Left cardiac atrium (tissue), 4 donors: ENCODE measurements at regions of chr22 and their contacts with region 1.

Region 1: DNA sequence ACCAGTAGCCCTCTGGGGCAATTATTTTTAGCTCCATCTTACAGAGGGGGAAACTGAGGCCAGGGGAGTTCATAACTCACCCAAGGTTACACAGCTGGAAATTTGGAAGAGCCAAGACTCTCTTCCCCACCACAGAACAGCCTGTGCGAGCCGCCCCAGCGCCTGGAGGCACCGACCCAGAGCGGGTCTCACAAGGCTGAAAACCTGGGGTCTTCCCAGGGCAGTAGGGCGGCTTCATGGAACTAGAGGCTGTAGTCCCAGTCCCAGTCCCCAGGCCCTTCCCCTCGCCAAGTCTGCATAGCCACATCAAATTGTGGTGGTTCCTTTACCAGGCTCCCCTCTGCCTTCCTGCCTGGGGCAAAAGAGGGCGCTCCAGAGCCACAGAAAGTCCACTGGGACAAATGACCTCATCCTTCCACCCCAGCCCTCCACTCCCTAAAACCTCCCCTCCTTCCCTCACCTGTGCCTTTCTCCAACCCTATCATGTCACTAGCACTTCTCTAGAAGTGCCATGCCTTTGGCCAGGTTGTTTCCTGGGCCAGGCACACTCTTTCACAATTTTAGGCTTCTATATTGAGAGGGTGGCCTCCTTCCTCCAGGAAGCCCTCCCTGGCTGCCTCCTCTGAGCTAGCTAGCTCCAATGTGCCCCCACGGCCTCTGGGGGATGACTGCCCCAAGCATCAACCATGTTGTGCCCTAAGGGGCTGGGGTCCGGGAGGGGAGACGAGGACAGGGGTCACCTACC is 15.2 kb upstream of the CDC42EP1 start:
- DNase-seq: peak; percentile 78
- ATAC-seq: peak; percentile 27 to 57

Region 2: DNA sequence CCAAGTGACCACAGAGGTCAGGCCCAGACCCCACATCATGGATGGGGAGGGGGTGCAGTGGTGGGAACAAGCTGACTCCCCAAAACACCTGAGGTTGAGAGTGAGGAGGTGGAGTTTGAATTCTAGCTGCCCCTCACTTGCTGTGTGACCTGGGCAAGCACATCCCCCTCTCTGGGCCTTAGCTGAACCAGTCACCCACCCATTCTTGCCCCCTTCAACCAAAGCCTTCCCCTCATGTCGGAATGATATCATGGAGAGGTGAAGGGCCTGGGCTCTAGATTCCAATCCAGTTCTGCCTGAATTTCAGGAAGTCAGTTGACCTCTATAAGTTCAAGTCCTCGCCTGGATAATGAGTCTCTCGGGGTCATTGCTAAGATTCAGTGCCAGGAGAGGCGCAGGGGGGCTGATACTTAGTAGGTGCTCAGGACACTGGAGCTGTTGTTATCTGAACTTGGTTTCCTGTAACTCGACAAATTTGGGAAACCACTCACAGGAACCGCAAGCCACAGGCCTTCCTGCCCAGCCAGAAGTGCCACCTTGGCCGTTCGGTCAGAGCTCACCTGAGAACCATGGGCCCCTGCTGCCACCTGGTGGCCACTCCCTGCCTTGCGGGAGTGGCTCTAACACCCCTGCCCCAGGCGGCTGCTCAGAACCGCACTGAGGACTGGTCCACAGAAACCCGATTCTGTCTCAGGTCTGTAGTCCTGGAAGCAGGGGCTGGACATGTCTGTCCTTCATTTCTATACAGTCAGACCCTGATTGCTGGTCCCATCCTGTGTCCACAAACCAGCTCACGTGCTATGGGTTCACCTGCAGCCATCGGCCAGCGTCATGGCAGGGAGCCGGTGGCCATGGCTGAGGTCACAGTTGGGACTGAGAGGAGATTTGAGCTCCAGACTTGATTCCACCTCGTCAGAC is 22.0 kb after region 1 on chr22:
- intact Hi-C with region 1: loop called in 1 of 2 experiments (anchors 2 kb)
- DNase-seq: peak; percentile 81
- ATAC-seq: peak; percentile 40 to 60

Region 3: DNA sequence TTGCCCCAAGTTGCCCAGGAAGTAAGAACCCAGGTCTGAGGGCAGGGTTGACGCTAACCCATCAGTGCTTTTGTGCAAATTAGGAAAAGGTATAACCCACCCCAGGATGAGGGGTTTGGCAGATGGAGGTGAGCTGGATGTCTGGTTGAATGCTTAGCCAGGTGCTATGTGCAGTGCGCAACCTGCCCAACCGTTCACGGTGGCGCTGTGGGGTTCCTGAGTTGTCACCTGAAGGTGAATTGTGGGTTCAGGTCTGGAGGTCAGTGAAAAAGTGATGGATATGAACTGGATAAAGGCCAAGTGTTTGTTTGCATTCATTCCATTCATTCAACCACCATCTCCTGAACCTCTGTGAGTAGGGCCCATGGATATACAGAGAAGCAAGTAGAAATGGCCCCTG is 49.1 kb after region 1 on chr22:
- intact Hi-C with region 1: loop called in 1 of 2 experiments (anchors 2 kb)
- DNase-seq: no peak
- ATAC-seq: no peak

Region 4: GRCh38 chr22:37753751-37754150 is 208.6 kb after region 1 on chr22:
- intact Hi-C with region 1: no loop called
- DNase-seq: peak; percentile 54
- ATAC-seq: peak in 1 of 2 donors; percentile 7